A549 (cell line): ENCODE measurements at regions of chr21 and their contacts with region 1.

Region 1: GRCh38 chr21:30044445-30045064 is 104.8 kb upstream of the GRIK1 start:
- DNase-seq: peak in 1 of 2 experiments; percentile 6
- ATAC-seq: no peak
- H3K4me3 ChIP-seq: no peak overlapping the region
- H3K27ac ChIP-seq: no peak overlapping the region
- H3K4me1 ChIP-seq: no peaks in the 10 kb centered on the region
- CTCF ChIP-seq: peak; percentile 44; the same call in 2 of the 3 replicates
- EP300 ChIP-seq: no peak
- POLR2A ChIP-seq: no peak
- RAD21 ChIP-seq: peak; percentile 22 to 26; a peak in 1 of 5 replicates

Region 2: GRCh38 chr21:30033441-30033840 is 11.1 kb before region 1 on chr21:
- CTCF ChIA-PET with region 1: interaction called, 10 read pairs
- POLR2A ChIA-PET with region 1: no interaction called
- DNase-seq: no peak
- ATAC-seq: no peak
- H3K4me3 ChIP-seq: no peak overlapping the region
- H3K27ac ChIP-seq: no peak overlapping the region
- H3K4me1 ChIP-seq: no peaks in the 10 kb centered on the region
- CTCF ChIP-seq: no peak
- EP300 ChIP-seq: no peak
- POLR2A ChIP-seq: no peak
- RAD21 ChIP-seq: no peak

Region 3: GRCh38 chr21:31088315-31088714 is 1043.8 kb after region 1 on chr21:
- CTCF ChIA-PET with region 1: interaction called, 11 read pairs
- POLR2A ChIA-PET with region 1: no interaction called
- DNase-seq: no peak
- ATAC-seq: no peak
- H3K4me3 ChIP-seq: no peak overlapping the region
- H3K27ac ChIP-seq: no peak overlapping the region
- H3K4me1 ChIP-seq: no peaks in the 10 kb centered on the region
- CTCF ChIP-seq: no peak
- EP300 ChIP-seq: no peak
- POLR2A ChIP-seq: no peak
- RAD21 ChIP-seq: no peak